ENCODE measurements at regions of chr19 and their contacts with region 1.

Region 1: DNA sequence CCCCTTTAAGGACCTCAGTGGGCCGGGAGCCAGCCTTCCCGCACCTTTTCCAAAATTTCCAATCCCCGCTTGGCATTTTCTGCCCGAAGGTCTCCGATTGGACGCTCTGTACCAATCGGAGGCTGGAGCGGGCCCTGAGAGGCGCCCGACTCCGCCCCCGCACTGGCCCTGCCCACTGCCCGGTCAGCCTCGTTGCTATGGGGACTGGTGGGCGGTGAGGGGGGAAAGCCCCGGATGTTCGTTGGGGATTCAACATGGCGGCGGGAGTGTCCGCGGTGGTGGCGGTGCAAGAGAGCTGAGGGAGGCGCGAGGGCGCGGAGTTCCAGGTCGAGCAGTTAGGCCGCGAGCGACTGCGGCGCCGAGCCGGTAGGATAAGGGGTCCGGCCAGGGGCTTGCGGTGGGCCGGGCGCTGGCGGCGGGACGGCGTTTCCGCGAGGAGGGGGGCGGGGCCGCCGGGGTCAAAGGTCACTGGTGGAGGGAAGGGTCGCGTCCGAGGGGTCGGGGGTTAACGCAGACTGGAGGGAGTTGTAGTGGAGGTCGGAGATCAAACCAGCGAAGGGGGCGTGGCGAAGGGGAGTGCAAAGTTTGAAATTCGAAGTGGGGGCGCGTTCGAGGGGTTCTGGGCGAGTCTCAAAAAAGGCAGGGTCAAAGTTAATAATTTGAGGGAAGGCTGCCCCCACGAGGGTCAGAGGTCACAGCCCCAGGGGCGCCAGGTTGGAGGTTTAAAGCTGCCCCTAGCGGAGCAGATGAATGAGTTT is at the start of gene PAK4:
- DNase-seq: peak; percentile 96 to 98
- ATAC-seq: peak; percentile 99 to 100 (median 100)
- H3K4me3 ChIP-seq: peak within 1 kb of the TSS; percentile 45 to 85 (median 80)
- H3K27ac ChIP-seq: peak within 1 kb of the TSS in 9 of 10 donors; percentile 50 to 89 (median 83)
- H3K4me1 ChIP-seq: peaks cover 2 to 61% (median 31%) of the 10 kb centered on the region in 9 donors
- H3K27me3 ChIP-seq: peaks cover 0 to 11% (median 5%) of the 10 kb centered on the region in 7 donors
- CTCF ChIP-seq: no peak
- total RNA-seq, gene PAK4: 11.7 to 22.4 (median 16.1) TPM

Region 2: DNA sequence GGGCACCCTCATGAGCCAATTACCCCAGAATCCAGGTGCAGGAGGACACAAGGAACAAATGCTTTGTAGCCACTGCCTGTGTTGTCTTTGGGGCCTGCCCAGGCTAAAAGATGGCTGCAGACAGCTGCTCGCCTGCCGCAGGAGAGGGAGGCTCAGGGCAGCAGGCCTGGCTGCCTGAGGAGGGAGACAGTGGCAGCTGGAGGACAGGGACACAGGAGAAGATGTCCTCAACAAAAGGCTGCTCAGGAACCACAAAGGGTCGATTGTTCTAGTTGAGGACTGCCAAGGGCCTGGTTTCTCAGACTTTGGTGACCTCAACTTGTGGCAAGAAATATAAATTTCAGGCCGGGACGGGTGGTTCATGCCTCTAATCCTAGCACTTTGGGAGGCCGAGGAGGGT is 234.0 kb before region 1 on chr19:
- intact Hi-C with region 1: no loop called
- DNase-seq: no peak
- ATAC-seq: no peak
- H3K4me3 ChIP-seq: no peak overlapping the region
- H3K27ac ChIP-seq: peak overlapping the region in 1 of 10 donors; percentile 35
- H3K4me1 ChIP-seq: peaks cover 0 to 31% (median 15%) of the 10 kb centered on the region in 9 donors
- H3K27me3 ChIP-seq: no peaks in the 10 kb centered on the region
- CTCF ChIP-seq: no peak

Region 3: DNA sequence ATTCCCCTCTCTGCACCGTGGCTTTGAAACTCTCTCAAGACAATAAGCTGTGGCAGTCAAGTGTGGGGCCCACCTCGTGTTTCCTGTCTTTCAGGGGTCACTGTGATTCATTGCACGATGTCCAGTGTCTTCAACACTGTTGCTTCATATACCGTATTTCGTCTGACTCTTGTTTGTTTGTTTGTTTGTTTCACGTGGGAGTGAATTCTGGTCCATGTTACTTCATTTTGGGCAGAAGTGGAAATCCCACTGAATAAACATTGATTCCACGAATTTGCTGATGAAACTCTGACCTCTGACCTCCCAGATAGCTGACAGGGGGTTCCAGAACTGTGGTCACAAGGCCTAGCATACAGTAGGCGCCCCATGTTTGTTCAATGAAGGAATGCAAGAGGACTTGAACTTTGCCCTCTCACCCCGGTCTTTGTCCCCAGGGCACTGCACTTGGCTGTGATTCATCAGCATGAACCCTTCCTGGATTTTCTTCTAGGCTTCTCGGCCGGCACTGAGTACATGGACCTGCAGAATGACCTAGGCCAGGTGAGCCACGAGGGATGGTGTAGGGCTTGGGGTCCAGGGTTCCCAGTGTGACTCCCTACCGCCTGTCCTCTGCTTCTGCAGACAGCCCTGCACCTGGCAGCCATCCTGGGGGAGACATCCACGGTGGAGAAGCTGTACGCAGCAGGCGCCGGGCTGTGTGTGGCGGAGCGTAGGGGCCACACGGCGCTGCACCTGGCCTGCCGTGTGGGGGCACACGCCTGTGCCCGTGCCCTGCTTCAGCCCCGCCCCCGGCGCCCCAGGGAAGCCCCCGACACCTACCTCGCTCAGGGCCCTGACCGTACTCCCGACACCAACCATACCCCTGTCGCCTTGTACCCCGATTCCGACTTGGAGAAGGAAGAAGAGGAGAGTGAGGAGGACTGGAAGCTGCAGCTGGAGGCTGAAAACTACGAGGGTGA is 220.9 kb before region 1 on chr19:
- intact Hi-C with region 1: no loop called
- DNase-seq: no peak
- ATAC-seq: peak in 1 of 8 donors; percentile 32
- H3K4me3 ChIP-seq: no peak overlapping the region
- H3K27ac ChIP-seq: no peak overlapping the region
- H3K4me1 ChIP-seq: peaks cover 0 to 20% (median 12%) of the 10 kb centered on the region in 9 donors
- H3K27me3 ChIP-seq: no peaks in the 10 kb centered on the region
- CTCF ChIP-seq: no peak

Region 4: GRCh38 chr19:38932425-38933179 is 193.1 kb before region 1 on chr19:
- intact Hi-C with region 1: no loop called
- DNase-seq: no peak
- ATAC-seq: no peak
- H3K4me3 ChIP-seq: no peak overlapping the region
- H3K27ac ChIP-seq: no peak overlapping the region
- H3K4me1 ChIP-seq: peaks cover 9 to 45% (median 30%) of the 10 kb centered on the region in 9 donors
- H3K27me3 ChIP-seq: no peaks in the 10 kb centered on the region
- CTCF ChIP-seq: peak in 7 of 9 donors; percentile 17 to 48 (median 42)

Region 5: DNA sequence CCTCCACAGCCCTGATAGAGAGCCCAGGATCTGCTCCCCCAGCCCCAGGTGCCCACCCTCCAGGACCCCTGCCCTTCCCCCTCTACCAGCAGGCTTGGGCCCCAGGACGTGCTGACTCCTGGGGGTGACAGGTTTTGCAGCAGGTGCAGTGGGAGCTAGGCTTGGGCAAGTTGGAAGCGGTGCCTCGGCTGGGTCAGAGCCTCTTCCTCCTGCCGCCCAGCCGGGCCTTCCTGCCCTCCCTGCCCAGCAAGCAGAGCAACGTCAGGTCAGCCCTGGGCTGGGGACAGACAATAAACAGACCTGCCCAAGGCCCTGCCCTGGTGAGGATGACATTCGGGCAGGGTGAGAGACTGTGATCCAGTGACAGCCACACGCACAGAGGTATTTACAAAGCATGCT is 61.8 kb after region 1 on chr19:
- intact Hi-C with region 1: loop called in 9 of 10 experiments (anchors 1 to 5 kb)
- DNase-seq: no peak
- ATAC-seq: peak in 6 of 8 donors; percentile 20 to 65 (median 50)
- H3K4me3 ChIP-seq: no peak overlapping the region
- H3K27ac ChIP-seq: no peak overlapping the region
- H3K4me1 ChIP-seq: no peaks in the 10 kb centered on the region
- H3K27me3 ChIP-seq: peaks cover 0 to 47% (median 22%) of the 10 kb centered on the region in 7 donors
- CTCF ChIP-seq: peak in 2 of 9 donors; percentile 14 to 18

Region 6: DNA sequence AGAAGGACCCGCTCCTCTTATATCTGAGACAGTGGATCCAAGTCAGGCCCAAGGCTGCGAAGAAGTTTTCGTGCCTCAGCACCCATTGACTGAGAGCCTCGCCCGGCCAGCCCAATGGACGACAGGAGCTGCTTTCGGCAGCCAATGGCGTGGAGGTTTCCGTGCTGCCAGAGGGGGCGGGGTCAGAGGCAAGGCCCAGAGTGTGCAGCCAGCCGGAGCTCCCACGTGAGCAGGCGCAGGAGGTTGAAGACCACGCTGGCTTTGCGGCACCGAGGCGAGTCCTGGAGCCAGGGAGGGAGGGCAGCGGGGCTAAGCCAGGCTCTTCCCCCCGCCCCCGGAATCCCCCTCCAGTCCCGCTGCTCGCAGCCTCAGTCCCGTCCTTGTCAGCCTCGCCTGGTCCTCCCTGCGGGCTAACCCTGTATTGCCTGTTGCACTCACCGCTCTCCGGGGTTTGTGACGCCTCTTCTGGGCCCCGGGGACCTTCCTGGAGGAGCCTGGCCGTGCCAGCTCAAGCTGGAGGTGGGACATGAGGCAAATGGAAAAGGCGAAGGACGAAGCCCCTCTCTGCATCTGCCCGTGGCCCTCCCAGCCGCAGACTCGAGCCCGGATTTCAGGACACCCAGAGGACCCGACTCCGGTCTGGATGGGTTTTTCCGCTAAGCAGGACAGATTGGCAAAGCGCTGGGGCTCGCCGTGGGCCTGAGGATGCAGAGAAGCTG is 121.4 kb after region 1 on chr19:
- intact Hi-C with region 1: no loop called
- DNase-seq: peak in 1 of 2 donors; percentile 16
- ATAC-seq: peak in 4 of 8 donors; percentile 39 to 64 (median 49)
- H3K4me3 ChIP-seq: peak overlapping the region in 1 of 10 donors; percentile 7
- H3K27ac ChIP-seq: no peak overlapping the region
- H3K4me1 ChIP-seq: peaks cover 0 to 14% (median 8%) of the 10 kb centered on the region in 9 donors
- H3K27me3 ChIP-seq: peaks cover 21 to 75% (median 57%) of the 10 kb centered on the region in 7 donors
- CTCF ChIP-seq: no peak

Measured in heart right ventricle (tissue), 16 donors.